CD4-positive, alpha-beta memory T cell (primary cell): ENCODE measurements at regions of chr18 and their contacts with region 1.

Region 1: GRCh38 chr18:48675352-48675761 is 136.5 kb downstream of the CTIF start:
- DNase-seq: peak; percentile 70 to 79 (median 75)
- H3K4me3 ChIP-seq: no peak overlapping the region
- H3K4me3 Mint-ChIP-seq: no peak overlapping the region
- H3K27ac ChIP-seq: no peak overlapping the region
- H3K27ac Mint-ChIP-seq: peak overlapping the region in 1 of 7 donors; percentile 23
- H3K4me1 ChIP-seq: peaks cover 7% of the 10 kb centered on the region
- H3K4me1 Mint-ChIP-seq: peaks cover 0 to 3% (median 2%) of the 10 kb centered on the region in 4 donors
- H3K27me3 ChIP-seq: no peaks in the 10 kb centered on the region
- H3K27me3 Mint-ChIP-seq: no peaks in the 10 kb centered on the region

Region 2: GRCh38 chr18:48742706-48743475 is 67.5 kb after region 1 on chr18:
- CTCF ChIA-PET with region 1: no interaction called
- POLR2A ChIA-PET with region 1: no interaction called
- intact Hi-C with region 1: no loop called
- DNase-seq: no peak
- H3K4me3 ChIP-seq: no peak overlapping the region
- H3K4me3 Mint-ChIP-seq: no peak overlapping the region
- H3K27ac ChIP-seq: no peak overlapping the region
- H3K27ac Mint-ChIP-seq: no peak overlapping the region
- H3K4me1 ChIP-seq: no peaks in the 10 kb centered on the region
- H3K4me1 Mint-ChIP-seq: no peaks in the 10 kb centered on the region
- H3K27me3 ChIP-seq: no peaks in the 10 kb centered on the region
- H3K27me3 Mint-ChIP-seq: peaks cover 0 to 2% of the 10 kb centered on the region in 2 donors

Region 3: GRCh38 chr18:48777026-48777743 is 101.8 kb after region 1 on chr18:
- CTCF ChIA-PET with region 1: interaction called, 9 read pairs
- POLR2A ChIA-PET with region 1: no interaction called
- intact Hi-C with region 1: loop called (anchors 1 kb)
- DNase-seq: peak; percentile 64 to 75 (median 70)
- H3K4me3 ChIP-seq: no peak overlapping the region
- H3K4me3 Mint-ChIP-seq: no peak overlapping the region
- H3K27ac ChIP-seq: no peak overlapping the region
- H3K27ac Mint-ChIP-seq: peak overlapping the region in 1 of 7 donors; percentile 74
- H3K4me1 ChIP-seq: peaks cover 10% of the 10 kb centered on the region
- H3K4me1 Mint-ChIP-seq: peaks cover 4 to 18% (median 5%) of the 10 kb centered on the region in 4 donors
- H3K27me3 ChIP-seq: no peaks in the 10 kb centered on the region
- H3K27me3 Mint-ChIP-seq: no peaks in the 10 kb centered on the region

Region 4: DNA sequence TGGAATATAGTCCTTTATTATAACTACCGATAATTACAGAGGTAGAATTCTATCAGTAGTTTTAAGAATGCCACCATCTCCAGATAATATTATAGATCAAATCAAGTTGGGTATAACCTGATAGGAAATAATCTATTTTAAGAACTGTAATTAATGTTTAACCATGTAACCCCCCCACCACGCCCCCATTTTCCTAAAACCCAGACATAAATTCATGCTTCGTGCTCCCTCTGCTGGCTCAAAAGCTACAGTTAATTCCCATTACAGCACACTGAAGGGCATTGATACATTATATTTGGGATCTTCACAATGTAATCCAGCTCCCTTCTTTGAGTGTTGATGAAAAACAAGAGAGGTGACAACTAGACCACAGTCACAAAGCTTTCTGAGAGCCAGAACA is 503.4 kb after region 1 on chr18:
- CTCF ChIA-PET with region 1: interaction called, 4 read pairs
- POLR2A ChIA-PET with region 1: no interaction called
- intact Hi-C with region 1: loop called (anchors 2 kb)
- DNase-seq: no peak
- H3K4me3 ChIP-seq: no peak overlapping the region
- H3K4me3 Mint-ChIP-seq: no peak overlapping the region
- H3K27ac ChIP-seq: no peak overlapping the region
- H3K27ac Mint-ChIP-seq: no peak overlapping the region
- H3K4me1 ChIP-seq: no peaks in the 10 kb centered on the region
- H3K4me1 Mint-ChIP-seq: peaks cover 7 to 20% (median 13%) of the 10 kb centered on the region in 4 donors
- H3K27me3 ChIP-seq: no peaks in the 10 kb centered on the region
- H3K27me3 Mint-ChIP-seq: no peaks in the 10 kb centered on the region

Region 5: DNA sequence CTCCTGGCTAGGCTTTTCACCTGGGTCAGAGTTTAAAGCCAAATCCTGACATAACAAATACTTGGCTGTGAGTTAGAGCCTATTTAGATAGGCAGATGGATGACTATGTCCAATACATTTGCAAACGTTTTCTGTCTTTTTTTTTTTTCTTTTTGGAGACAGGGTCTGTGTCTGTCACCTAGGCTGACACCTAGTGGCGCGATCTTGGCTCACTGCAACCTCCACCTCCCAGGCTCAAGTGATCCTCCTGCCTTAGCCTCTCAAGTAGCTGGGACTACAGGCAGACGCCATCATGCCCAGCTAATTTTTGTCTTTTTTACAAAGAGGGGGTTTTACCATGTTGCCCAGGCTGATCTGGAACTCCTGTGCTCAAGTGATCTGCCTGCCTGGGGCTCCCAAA is 660.3 kb after region 1 on chr18:
- CTCF ChIA-PET with region 1: interaction called, 4 read pairs
- POLR2A ChIA-PET with region 1: no interaction called
- intact Hi-C with region 1: loop called (anchors 10 kb)
- DNase-seq: peak in 1 of 5 donors; percentile 1
- H3K4me3 ChIP-seq: no peak overlapping the region
- H3K4me3 Mint-ChIP-seq: no peak overlapping the region
- H3K27ac ChIP-seq: no peak overlapping the region
- H3K27ac Mint-ChIP-seq: no peak overlapping the region
- H3K4me1 ChIP-seq: no peaks in the 10 kb centered on the region
- H3K4me1 Mint-ChIP-seq: peaks cover 8 to 11% (median 9%) of the 10 kb centered on the region in 4 donors
- H3K27me3 ChIP-seq: no peaks in the 10 kb centered on the region
- H3K27me3 Mint-ChIP-seq: no peaks in the 10 kb centered on the region

Region 6: GRCh38 chr18:49447810-49448745 is 772.7 kb after region 1 on chr18:
- CTCF ChIA-PET with region 1: interaction called, 15 read pairs
- POLR2A ChIA-PET with region 1: no interaction called
- intact Hi-C with region 1: loop called (anchors 1 kb)
- DNase-seq: peak; percentile 41 to 66 (median 52)
- H3K4me3 ChIP-seq: no peak overlapping the region
- H3K4me3 Mint-ChIP-seq: no peak overlapping the region
- H3K27ac ChIP-seq: no peak overlapping the region
- H3K27ac Mint-ChIP-seq: peak overlapping the region in 3 of 7 donors; percentile 20 to 43 (median 34)
- H3K4me1 ChIP-seq: no peaks in the 10 kb centered on the region
- H3K4me1 Mint-ChIP-seq: peaks cover 14 to 26% (median 21%) of the 10 kb centered on the region in 4 donors
- H3K27me3 ChIP-seq: no peaks in the 10 kb centered on the region
- H3K27me3 Mint-ChIP-seq: no peaks in the 10 kb centered on the region

Region 7: GRCh38 chr18:49858309-49859020 is 1183.1 kb after region 1 on chr18:
- CTCF ChIA-PET with region 1: interaction called, 9 read pairs
- POLR2A ChIA-PET with region 1: no interaction called
- intact Hi-C with region 1: loop called (anchors 1 kb)
- DNase-seq: peak in 4 of 5 donors; percentile 28 to 47 (median 44)
- H3K4me3 ChIP-seq: no peak overlapping the region
- H3K4me3 Mint-ChIP-seq: no peak overlapping the region
- H3K27ac ChIP-seq: no peak overlapping the region
- H3K27ac Mint-ChIP-seq: no peak overlapping the region
- H3K4me1 ChIP-seq: no peaks in the 10 kb centered on the region
- H3K4me1 Mint-ChIP-seq: no peaks in the 10 kb centered on the region
- H3K27me3 ChIP-seq: no peaks in the 10 kb centered on the region
- H3K27me3 Mint-ChIP-seq: peaks cover 0 to 2% of the 10 kb centered on the region in 2 donors